ENCODE measurements at regions of chr1 and their contacts with region 1.

Region 1: GRCh38 chr1:56831871-56832693 is 12.9 kb upstream of the FYB2 start:
- DNase-seq: peak; percentile 67
- ATAC-seq: peak; percentile 64
- H3K4me3 ChIP-seq: no peak overlapping the region
- H3K27ac ChIP-seq: no peak overlapping the region
- H3K4me1 ChIP-seq: peaks cover 49% of the 10 kb centered on the region
- H3K27me3 ChIP-seq: no peaks in the 10 kb centered on the region
- CTCF ChIP-seq: peak; percentile 89
- EP300 ChIP-seq: no peak
- POLR2A ChIP-seq: no peak
- RAD21 ChIP-seq: peak; percentile 90

Region 2: GRCh38 chr1:56811331-56811730 is 20.8 kb before region 1 on chr1:
- CTCF ChIA-PET with region 1: no interaction called
- POLR2A ChIA-PET with region 1: no interaction called
- in situ Hi-C with region 1: no loop called
- intact Hi-C with region 1: no loop called
- DNase-seq: no peak
- ATAC-seq: no peak
- H3K4me3 ChIP-seq: no peak overlapping the region
- H3K27ac ChIP-seq: no peak overlapping the region
- H3K4me1 ChIP-seq: peaks cover 16% of the 10 kb centered on the region
- H3K27me3 ChIP-seq: no peaks in the 10 kb centered on the region
- CTCF ChIP-seq: no peak
- EP300 ChIP-seq: no peak
- POLR2A ChIP-seq: no peak
- RAD21 ChIP-seq: no peak

Region 3: GRCh38 chr1:56863265-56863992 is 31.3 kb after region 1 on chr1:
- CTCF ChIA-PET with region 1: no interaction called
- POLR2A ChIA-PET with region 1: no interaction called
- in situ Hi-C with region 1: no loop called
- intact Hi-C with region 1: no loop called
- DNase-seq: no peak
- ATAC-seq: no peak
- H3K4me3 ChIP-seq: no peak overlapping the region
- H3K27ac ChIP-seq: no peak overlapping the region
- H3K4me1 ChIP-seq: peaks cover 2% of the 10 kb centered on the region; the same call in 1 of the 2 replicates
- H3K27me3 ChIP-seq: no peaks in the 10 kb centered on the region
- CTCF ChIP-seq: no peak
- EP300 ChIP-seq: no peak
- POLR2A ChIP-seq: no peak
- RAD21 ChIP-seq: no peak

Region 4: DNA sequence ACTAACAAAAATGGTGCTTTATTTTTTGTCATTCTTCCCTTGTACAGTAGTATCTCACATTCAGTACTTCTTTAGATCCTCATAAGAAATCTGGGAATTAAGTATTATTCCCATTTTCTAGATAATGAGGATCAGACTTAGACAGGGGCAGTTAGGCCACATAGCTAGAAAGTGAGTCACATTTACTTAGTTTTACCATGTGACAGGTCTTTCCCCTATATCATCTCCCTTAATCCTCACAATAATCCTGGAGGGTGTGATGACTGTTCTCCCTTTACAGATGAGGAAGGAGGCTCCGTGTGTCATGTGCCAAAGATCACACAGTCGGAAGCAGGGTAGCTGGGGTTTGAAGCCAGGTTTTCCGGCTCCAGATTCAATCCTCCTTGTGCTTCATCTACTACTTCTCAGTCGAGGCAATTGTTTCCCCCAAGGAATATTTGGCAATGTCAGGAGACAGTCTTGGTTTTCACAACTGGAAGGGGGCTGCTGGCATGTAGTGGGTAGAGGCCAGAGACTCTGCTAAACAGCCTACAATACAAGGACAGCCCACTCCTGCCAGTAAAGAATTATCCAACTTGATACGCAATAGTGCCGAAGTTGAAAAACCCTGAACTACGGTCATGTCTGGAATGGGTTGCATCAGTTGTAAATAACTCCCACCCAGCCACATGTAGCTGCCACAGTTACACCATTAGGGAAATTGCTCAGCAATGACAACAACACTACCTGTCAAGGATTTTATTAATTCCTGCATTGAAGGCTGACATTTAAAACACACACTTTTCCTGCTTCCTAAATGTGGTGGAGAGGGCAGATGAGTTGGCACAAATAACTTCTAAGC is 79.2 kb after region 1 on chr1:
- CTCF ChIA-PET with region 1: no interaction called
- POLR2A ChIA-PET with region 1: interaction called, 12 read pairs
- in situ Hi-C with region 1: no loop called
- intact Hi-C with region 1: loop called (anchors 2 kb)
- DNase-seq: peak; percentile 77
- ATAC-seq: peak; percentile 50
- H3K4me3 ChIP-seq: peak overlapping the region in 1 of 3 experiments; percentile 11; a peak in 1 of 6 replicates
- H3K27ac ChIP-seq: peak overlapping the region; percentile 92
- H3K4me1 ChIP-seq: peaks cover 77% of the 10 kb centered on the region
- H3K27me3 ChIP-seq: no peaks in the 10 kb centered on the region
- CTCF ChIP-seq: no peak
- EP300 ChIP-seq: peak in 1 of 2 experiments; percentile 81; a peak in 2 of 4 replicates
- POLR2A ChIP-seq: no peak
- RAD21 ChIP-seq: no peak

Region 5: DNA sequence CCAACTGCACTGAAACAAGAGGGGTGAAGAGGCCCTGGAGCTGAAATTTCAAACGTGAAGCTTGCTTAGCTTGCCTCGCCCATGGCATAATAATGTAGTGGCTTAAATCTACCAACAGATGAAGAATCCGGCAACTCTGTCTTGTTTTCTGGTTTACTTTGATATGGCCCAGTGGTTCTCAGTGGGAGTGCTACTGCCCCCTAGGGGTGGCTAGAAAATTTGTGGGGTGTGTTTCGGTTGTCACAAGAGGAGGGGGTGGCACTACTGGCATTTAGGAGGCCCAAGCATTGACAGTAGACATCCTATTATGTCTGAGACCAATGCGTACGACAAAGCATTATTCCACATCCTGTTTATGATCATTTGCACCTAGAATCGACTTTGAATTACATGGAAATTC is 185.6 kb after region 1 on chr1:
- CTCF ChIA-PET with region 1: interaction called, 7 read pairs
- POLR2A ChIA-PET with region 1: no interaction called
- in situ Hi-C with region 1: no loop called
- intact Hi-C with region 1: loop called (anchors 1 kb)
- DNase-seq: peak; percentile 21
- ATAC-seq: no peak
- H3K4me3 ChIP-seq: no peak overlapping the region
- H3K27ac ChIP-seq: no peak overlapping the region
- H3K4me1 ChIP-seq: peaks cover 14% of the 10 kb centered on the region
- H3K27me3 ChIP-seq: no peaks in the 10 kb centered on the region
- CTCF ChIP-seq: peak; percentile 38
- EP300 ChIP-seq: no peak
- POLR2A ChIP-seq: no peak
- RAD21 ChIP-seq: no peak

Region 6: DNA sequence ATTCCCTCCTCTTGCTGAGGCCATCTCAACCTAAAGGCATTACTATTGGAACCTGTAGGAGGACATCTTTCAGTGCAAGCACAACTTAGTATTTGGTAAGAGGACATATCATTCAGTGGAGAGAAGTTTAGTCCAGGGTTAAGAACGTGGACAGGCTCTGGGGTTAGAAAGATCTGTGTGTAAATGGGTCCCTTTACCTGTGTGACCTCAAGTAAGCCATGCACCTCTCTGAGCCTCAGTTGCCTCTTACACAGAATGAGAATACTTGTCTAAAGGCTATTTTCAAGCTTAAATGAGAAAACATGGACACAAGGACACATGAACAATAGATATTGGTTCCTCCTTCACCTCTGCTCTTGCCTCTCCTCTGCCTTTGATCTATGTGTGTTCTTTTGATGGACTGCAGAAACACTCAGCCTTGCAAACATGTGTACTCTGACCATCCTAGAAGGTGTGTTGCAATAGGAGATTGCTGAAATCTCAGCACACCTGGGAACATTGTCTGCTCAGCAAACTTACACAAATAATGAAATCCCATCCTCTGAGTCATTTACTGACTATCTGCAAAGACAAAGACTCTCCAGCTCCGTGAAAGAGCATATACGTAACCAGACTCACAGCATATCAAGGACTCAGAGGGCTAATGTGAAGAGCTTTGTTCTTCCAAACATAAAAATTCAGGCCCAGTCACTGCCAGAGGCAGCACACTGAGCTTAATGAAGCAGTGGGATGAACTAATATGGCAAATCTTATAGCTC is 448.0 kb after region 1 on chr1:
- CTCF ChIA-PET with region 1: no interaction called
- POLR2A ChIA-PET with region 1: no interaction called
- in situ Hi-C with region 1: loop called (anchors 25 kb)
- intact Hi-C with region 1: no loop called
- DNase-seq: peak; percentile 100
- ATAC-seq: peak; percentile 95
- H3K4me3 ChIP-seq: peak overlapping the region in 1 of 3 experiments; percentile 7; a peak in 1 of 6 replicates
- H3K27ac ChIP-seq: peak overlapping the region; percentile 90
- H3K4me1 ChIP-seq: peaks cover 54% of the 10 kb centered on the region
- H3K27me3 ChIP-seq: no peaks in the 10 kb centered on the region
- CTCF ChIP-seq: no peak
- EP300 ChIP-seq: peak; percentile 99 to 100
- POLR2A ChIP-seq: peak in 1 of 2 experiments; percentile 63; a peak in 1 of 4 replicates
- RAD21 ChIP-seq: no peak

Region 7: GRCh38 chr1:58047265-58047858 is 1215.3 kb after region 1 on chr1:
- CTCF ChIA-PET with region 1: no interaction called
- POLR2A ChIA-PET with region 1: no interaction called
- in situ Hi-C with region 1: loop called (anchors 25 kb)
- intact Hi-C with region 1: no loop called
- DNase-seq: peak; percentile 6
- ATAC-seq: peak; percentile 83
- H3K4me3 ChIP-seq: no peak overlapping the region
- H3K27ac ChIP-seq: no peak overlapping the region
- H3K4me1 ChIP-seq: no peaks in the 10 kb centered on the region
- H3K27me3 ChIP-seq: no peaks in the 10 kb centered on the region
- CTCF ChIP-seq: peak; percentile 71
- EP300 ChIP-seq: no peak
- POLR2A ChIP-seq: no peak
- RAD21 ChIP-seq: peak; percentile 34; the same call in 1 of the 2 replicates